Endothelial cell of umbilical vein (primary cell): ENCODE measurements at regions of chr6 and their contacts with region 1.

Region 1: DNA sequence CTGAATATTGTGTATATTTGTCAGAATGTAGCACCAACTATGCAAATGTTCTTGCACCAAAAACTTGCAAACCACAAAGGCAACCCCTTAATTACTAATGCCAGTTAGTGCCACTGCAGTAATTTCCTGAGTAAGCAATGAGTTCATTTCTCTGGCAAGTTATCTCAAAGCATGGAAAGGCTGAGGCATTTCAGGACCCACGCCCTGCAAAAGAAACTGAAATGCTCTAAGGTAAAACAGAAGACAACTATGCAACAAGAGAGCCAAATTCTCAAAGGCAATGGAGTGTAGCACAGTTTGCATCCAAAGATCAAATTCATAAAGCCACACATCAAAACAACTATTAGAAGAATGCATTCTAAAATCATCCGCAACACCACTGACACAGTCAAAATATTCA is 994.4 kb downstream of the EYS start:
- DNase-seq: no peak
- H3K4me3 ChIP-seq: no peak overlapping the region
- H3K27ac ChIP-seq: no peak overlapping the region
- H3K4me1 ChIP-seq: peaks cover 5% of the 10 kb centered on the region
- H3K27me3 ChIP-seq: no peaks in the 10 kb centered on the region
- CTCF ChIP-seq: no peak
- POLR2A ChIP-seq: no peak

Region 2: DNA sequence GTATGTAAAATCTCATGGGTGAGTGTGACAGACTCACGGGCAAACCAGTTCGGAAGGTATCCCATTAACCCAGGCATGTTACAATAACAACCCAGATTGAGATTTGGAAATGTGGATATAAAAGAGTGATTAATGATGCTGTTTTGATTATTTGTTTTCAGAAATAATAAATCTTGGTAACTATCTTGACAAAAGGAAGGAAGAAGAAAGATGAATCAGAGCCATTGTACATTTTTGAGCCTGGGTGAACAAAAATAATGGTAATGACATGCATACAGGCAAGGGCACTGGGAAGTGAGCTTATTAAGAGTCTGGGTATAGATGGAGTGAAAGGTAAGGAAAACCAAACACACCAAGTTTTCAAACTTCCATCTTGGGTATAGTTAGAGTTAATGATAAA is 215.0 kb before region 1 on chr6:
- CTCF ChIA-PET with region 1: no interaction called
- POLR2A ChIA-PET with region 1: no interaction called
- dilution Hi-C with region 1: no loop called
- intact Hi-C with region 1: loop called (anchors 5 kb)
- DNase-seq: peak; percentile 81
- H3K4me3 ChIP-seq: no peak overlapping the region
- H3K27ac ChIP-seq: peak overlapping the region; percentile 38
- H3K4me1 ChIP-seq: peaks cover 15% of the 10 kb centered on the region
- H3K27me3 ChIP-seq: no peaks in the 10 kb centered on the region
- CTCF ChIP-seq: no peak
- POLR2A ChIP-seq: no peak

Region 3: DNA sequence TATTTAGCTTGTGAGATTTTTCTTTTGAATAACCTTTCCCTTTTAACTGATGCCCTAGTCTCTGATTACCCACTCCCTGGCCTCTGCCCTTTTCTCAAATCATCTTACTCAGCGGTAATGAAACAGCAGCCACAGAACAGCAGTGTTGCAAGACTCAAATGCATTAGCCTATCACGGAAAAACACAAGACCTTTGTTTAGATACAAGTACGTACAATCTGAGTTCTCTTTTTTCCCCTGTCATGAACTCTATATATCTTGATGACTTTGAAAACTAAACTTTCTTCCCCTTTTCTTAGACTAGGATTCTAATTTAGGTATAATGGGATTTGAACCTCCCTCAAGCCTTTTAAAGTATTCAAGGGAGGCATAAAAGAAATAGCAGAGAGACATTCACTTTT is 40.5 kb before region 1 on chr6:
- CTCF ChIA-PET with region 1: no interaction called
- POLR2A ChIA-PET with region 1: no interaction called
- dilution Hi-C with region 1: no loop called
- intact Hi-C with region 1: no loop called
- DNase-seq: no peak
- H3K4me3 ChIP-seq: no peak overlapping the region
- H3K27ac ChIP-seq: no peak overlapping the region
- H3K4me1 ChIP-seq: no peaks in the 10 kb centered on the region
- H3K27me3 ChIP-seq: no peaks in the 10 kb centered on the region
- CTCF ChIP-seq: no peak
- POLR2A ChIP-seq: no peak